Endothelial cell of umbilical vein (primary cell): ENCODE measurements at regions of chr5 and their contacts with region 1.

Region 1: DNA sequence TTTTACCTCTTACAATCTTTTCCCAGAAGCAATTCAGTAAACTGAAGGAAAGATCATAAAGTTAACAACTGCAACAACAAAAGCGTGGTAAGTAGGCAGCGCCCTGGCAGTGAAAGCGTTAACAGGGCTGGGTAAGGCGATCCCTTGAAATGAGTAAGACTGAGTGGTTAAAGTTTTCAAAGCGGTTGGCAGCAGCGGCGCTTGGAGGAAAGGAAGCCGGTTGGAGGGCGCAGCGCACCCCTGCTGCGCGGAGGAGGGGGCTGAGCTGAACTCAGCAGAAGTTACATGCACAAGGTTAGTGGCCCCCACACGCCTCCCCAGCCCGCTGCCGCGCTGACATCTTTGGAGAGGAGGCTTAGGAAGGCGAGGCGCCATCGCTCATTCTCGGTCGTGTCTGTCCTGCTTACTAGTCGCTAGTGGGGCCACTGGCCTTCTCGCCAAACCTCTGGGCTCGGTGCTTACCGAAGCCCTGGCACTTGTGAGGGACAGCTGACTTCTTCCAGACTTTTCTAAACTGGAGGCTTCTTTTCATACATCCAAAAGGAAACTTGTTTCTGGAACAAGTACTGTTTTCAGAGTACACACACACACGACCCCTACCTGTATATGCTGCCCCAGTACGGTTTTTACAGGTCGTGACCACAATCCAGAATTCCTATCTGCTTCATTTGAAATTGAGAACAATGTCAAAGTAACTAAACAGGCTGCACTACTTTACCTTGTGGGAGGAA is at the start of gene SH3RF2:
- DNase-seq: peak; percentile 86
- H3K4me3 ChIP-seq: peak within 1 kb of the TSS; percentile 0 to 53 (median 38)
- H3K27ac ChIP-seq: no peak within 1 kb of the TSS
- H3K4me1 ChIP-seq: peaks cover 12% of the 10 kb centered on the region
- H3K27me3 ChIP-seq: peaks cover 0 to 11% of the 10 kb centered on the region in 2 experiments
- CTCF ChIP-seq: no peak
- POLR2A ChIP-seq: no peak
- total RNA-seq, gene SH3RF2: 0.84 and 0.90 TPM in 2 replicates

Region 2: DNA sequence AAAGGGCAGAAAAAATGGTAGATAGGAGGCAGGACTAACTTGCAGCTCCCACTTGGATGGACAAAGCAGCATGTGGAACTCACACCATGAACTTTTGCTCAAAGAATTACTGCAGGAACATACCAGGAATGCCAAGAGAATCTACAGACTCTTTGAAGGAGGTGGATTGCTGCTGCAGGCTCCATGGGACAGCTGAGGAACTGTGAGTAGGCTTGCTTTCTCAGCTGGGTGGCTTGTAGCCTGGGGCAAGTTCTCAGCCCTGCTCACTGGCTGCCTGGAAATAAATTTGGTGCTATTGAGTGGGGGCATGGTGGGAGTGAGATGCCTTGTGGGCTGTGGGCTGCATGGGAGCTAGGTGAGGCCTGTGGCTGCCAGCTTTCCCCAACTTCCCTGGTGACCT is 675.9 kb before region 1 on chr5:
- CTCF ChIA-PET with region 1: no interaction called
- POLR2A ChIA-PET with region 1: interaction called, 13 read pairs
- dilution Hi-C with region 1: no loop called
- intact Hi-C with region 1: no loop called
- DNase-seq: no peak
- H3K4me3 ChIP-seq: no peak overlapping the region
- H3K27ac ChIP-seq: no peak overlapping the region
- H3K4me1 ChIP-seq: peaks cover 4% of the 10 kb centered on the region
- H3K27me3 ChIP-seq: no peaks in the 10 kb centered on the region
- CTCF ChIP-seq: no peak
- POLR2A ChIP-seq: no peak

Region 3: GRCh38 chr5:145925353-145925752 is 11.2 kb before region 1 on chr5:
- CTCF ChIA-PET with region 1: interaction called, 5 read pairs
- POLR2A ChIA-PET with region 1: no interaction called
- dilution Hi-C with region 1: no loop called
- intact Hi-C with region 1: loop called (anchors 1 kb)
- DNase-seq: peak; percentile 80
- H3K4me3 ChIP-seq: no peak overlapping the region
- H3K27ac ChIP-seq: peak overlapping the region; percentile 37
- H3K4me1 ChIP-seq: peaks cover 19% of the 10 kb centered on the region
- H3K27me3 ChIP-seq: no peaks in the 10 kb centered on the region
- CTCF ChIP-seq: no peak
- POLR2A ChIP-seq: no peak

Region 4: DNA sequence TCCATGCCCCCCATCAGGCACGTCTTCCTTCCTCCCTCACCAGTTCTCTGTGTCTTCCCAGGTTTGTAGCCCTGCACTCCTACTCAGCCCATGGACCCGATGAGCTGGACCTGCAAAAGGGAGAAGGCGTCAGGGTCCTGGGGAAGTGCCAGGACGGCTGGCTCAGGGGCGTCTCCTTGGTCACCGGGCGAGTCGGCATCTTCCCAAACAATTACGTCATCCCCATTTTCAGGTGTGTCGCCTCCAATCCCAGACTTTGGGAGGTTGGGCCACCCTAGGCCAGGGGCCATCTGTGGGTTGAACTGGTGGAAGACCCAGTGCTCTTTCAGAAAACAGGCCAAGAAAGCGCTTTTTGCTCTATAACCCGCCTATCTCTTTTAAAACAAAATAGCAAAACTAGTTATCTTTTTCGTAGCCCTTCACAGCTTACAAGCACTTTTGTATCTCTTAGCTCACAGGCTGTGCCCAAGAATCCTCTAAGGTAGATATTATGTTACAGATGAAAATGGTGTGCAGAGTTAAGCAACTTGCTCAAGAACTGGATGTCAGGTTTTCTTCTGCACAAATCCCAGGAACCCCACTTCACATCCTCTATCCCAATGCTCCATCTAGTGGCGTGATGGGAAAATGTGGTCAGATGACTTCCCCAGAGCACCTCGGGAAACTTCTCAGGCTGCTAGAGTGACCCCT is 112.6 kb after region 1 on chr5:
- CTCF ChIA-PET with region 1: no interaction called
- POLR2A ChIA-PET with region 1: no interaction called
- dilution Hi-C with region 1: no loop called
- intact Hi-C with region 1: no loop called
- DNase-seq: peak; percentile 74
- H3K4me3 ChIP-seq: no peak overlapping the region
- H3K27ac ChIP-seq: no peak overlapping the region
- H3K4me1 ChIP-seq: no peaks in the 10 kb centered on the region
- H3K27me3 ChIP-seq: peaks cover 0 to 7% of the 10 kb centered on the region in 2 experiments
- CTCF ChIP-seq: peak; percentile 75
- POLR2A ChIP-seq: no peak

Region 5: DNA sequence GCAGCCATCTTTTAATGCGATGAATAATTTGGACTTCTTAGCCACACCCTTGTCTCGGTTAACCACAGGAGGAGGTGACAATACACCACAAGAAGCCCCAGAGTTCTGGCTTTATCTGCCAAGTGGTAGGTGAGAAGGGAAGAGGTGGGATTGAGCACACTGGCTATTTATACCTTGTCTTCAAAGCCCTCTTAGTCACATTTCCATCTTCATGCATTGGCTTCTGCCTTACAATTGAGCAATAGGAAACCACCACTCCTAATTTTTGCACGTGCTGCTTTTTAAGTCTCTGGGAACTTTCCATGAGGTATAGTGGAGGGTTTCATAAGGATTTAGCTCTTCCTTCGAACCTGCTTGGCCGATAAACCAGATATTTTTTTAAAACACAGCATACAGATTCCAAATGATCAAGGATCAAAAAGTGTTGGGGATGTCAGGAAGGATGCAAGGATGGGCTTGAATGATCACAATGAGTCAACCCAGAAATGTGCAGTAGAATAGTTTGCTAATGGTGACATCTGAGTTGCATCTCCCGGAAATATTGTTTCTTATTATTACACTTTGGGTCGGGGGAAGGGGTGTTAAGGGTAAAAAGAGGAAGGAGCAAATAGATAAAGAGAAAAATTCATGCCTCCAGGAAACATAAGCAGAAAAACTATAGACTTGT is 143.3 kb after region 1 on chr5:
- CTCF ChIA-PET with region 1: no interaction called
- POLR2A ChIA-PET with region 1: no interaction called
- dilution Hi-C with region 1: no loop called
- intact Hi-C with region 1: no loop called
- DNase-seq: no peak
- H3K4me3 ChIP-seq: no peak overlapping the region
- H3K27ac ChIP-seq: no peak overlapping the region
- H3K4me1 ChIP-seq: no peaks in the 10 kb centered on the region
- H3K27me3 ChIP-seq: peaks cover 2 to 6% of the 10 kb centered on the region in 2 experiments
- CTCF ChIP-seq: no peak
- POLR2A ChIP-seq: no peak

Region 6: GRCh38 chr5:146213210-146213826 is 276.8 kb after region 1 on chr5:
- CTCF ChIA-PET with region 1: no interaction called
- POLR2A ChIA-PET with region 1: no interaction called
- dilution Hi-C with region 1: no loop called
- intact Hi-C with region 1: no loop called
- DNase-seq: peak; percentile 50
- H3K4me3 ChIP-seq: no peak overlapping the region
- H3K27ac ChIP-seq: no peak overlapping the region
- H3K4me1 ChIP-seq: no peaks in the 10 kb centered on the region
- H3K27me3 ChIP-seq: no peaks in the 10 kb centered on the region
- CTCF ChIP-seq: no peak
- POLR2A ChIP-seq: no peak